HCT116 (cell line): ENCODE measurements at regions of chr7 and their contacts with region 1.

Region 1: GRCh38 chr7:130961128-130961601 is 227.2 kb upstream of the KLF14 start:
- DNase-seq: peak; percentile 75
- ATAC-seq: peak; percentile 69
- H3K4me3 ChIP-seq: peak overlapping the region; percentile 57 to 64
- H3K27ac ChIP-seq: peak overlapping the region; percentile 91
- H3K4me1 ChIP-seq: peaks cover 48 to 83% of the 10 kb centered on the region in 2 experiments
- H3K27me3 ChIP-seq: no peaks in the 10 kb centered on the region
- CTCF ChIP-seq: no peak
- POLR2A ChIP-seq: peak; percentile 66
- RAD21 ChIP-seq: no peak

Region 2: DNA sequence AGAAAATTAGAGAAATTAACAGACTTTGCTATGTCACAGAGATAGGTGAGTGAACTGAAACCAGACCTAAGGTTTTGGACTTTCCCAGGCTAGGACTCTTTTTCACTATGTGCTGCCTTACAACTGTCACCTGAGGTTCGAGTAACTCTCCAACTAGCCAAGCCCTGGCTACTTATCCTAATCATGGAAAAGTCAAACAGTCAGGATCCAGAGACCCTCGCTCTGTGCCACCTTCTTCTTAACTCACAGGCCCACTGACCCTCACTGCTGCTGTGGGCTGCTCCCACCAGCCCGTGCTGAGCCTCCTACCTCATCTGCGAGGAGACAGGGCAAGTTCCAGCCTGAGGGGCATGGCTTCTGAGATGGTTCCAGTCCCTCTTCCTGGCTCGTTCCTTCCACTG is 15.8 kb before region 1 on chr7:
- CTCF ChIA-PET with region 1: interaction called, 12 read pairs
- POLR2A ChIA-PET with region 1: interaction called, 21 read pairs
- RAD21 ChIA-PET with region 1: no interaction called
- intact Hi-C with region 1: no loop called
- DNase-seq: no peak
- ATAC-seq: no peak
- H3K4me3 ChIP-seq: no peak overlapping the region
- H3K27ac ChIP-seq: peak overlapping the region; percentile 85
- H3K4me1 ChIP-seq: peaks cover 76 to 96% of the 10 kb centered on the region in 2 experiments
- H3K27me3 ChIP-seq: no peaks in the 10 kb centered on the region
- CTCF ChIP-seq: no peak
- POLR2A ChIP-seq: no peak
- RAD21 ChIP-seq: no peak

Region 3: GRCh38 chr7:130982160-130982638 is 21.0 kb after region 1 on chr7:
- CTCF ChIA-PET with region 1: interaction called, 10 read pairs
- POLR2A ChIA-PET with region 1: interaction called, 6 read pairs
- RAD21 ChIA-PET with region 1: no interaction called
- intact Hi-C with region 1: no loop called
- DNase-seq: no peak
- ATAC-seq: peak; percentile 79
- H3K4me3 ChIP-seq: no peak overlapping the region
- H3K27ac ChIP-seq: peak overlapping the region; percentile 67
- H3K4me1 ChIP-seq: peaks cover 57 to 84% of the 10 kb centered on the region in 2 experiments
- H3K27me3 ChIP-seq: no peaks in the 10 kb centered on the region
- CTCF ChIP-seq: peak; percentile 75 to 85 (median 81)
- POLR2A ChIP-seq: no peak
- RAD21 ChIP-seq: peak; percentile 91

Region 4: GRCh38 chr7:131007394-131008330 is 46.5 kb after region 1 on chr7:
- CTCF ChIA-PET with region 1: interaction called, 3 read pairs
- POLR2A ChIA-PET with region 1: interaction called, 10 read pairs
- RAD21 ChIA-PET with region 1: no interaction called
- intact Hi-C with region 1: no loop called
- DNase-seq: peak; percentile 85
- ATAC-seq: peak; percentile 67
- H3K4me3 ChIP-seq: peak overlapping the region in 1 of 2 experiments; percentile 3; a peak in 1 of 4 replicates
- H3K27ac ChIP-seq: peak overlapping the region; percentile 96
- H3K4me1 ChIP-seq: peaks cover 94 to 97% of the 10 kb centered on the region in 2 experiments
- H3K27me3 ChIP-seq: no peaks in the 10 kb centered on the region
- CTCF ChIP-seq: peak in 2 of 3 experiments; percentile 48 to 60; a peak in 4 of 6 replicates
- POLR2A ChIP-seq: no peak
- RAD21 ChIP-seq: no peak

Region 5: GRCh38 chr7:131040467-131040932 is 79.3 kb after region 1 on chr7:
- CTCF ChIA-PET with region 1: interaction called, 15 read pairs
- POLR2A ChIA-PET with region 1: interaction called, 5 read pairs
- RAD21 ChIA-PET with region 1: interaction called in 1 of 2 experiments, 3 read pairs
- intact Hi-C with region 1: no loop called
- DNase-seq: peak; percentile 73
- ATAC-seq: peak; percentile 79
- H3K4me3 ChIP-seq: no peak overlapping the region
- H3K27ac ChIP-seq: peak overlapping the region; percentile 65
- H3K4me1 ChIP-seq: peaks cover 56 to 63% of the 10 kb centered on the region in 2 experiments
- H3K27me3 ChIP-seq: no peaks in the 10 kb centered on the region
- CTCF ChIP-seq: peak; percentile 85 to 96 (median 90)
- POLR2A ChIP-seq: no peak
- RAD21 ChIP-seq: peak; percentile 99

Region 6: DNA sequence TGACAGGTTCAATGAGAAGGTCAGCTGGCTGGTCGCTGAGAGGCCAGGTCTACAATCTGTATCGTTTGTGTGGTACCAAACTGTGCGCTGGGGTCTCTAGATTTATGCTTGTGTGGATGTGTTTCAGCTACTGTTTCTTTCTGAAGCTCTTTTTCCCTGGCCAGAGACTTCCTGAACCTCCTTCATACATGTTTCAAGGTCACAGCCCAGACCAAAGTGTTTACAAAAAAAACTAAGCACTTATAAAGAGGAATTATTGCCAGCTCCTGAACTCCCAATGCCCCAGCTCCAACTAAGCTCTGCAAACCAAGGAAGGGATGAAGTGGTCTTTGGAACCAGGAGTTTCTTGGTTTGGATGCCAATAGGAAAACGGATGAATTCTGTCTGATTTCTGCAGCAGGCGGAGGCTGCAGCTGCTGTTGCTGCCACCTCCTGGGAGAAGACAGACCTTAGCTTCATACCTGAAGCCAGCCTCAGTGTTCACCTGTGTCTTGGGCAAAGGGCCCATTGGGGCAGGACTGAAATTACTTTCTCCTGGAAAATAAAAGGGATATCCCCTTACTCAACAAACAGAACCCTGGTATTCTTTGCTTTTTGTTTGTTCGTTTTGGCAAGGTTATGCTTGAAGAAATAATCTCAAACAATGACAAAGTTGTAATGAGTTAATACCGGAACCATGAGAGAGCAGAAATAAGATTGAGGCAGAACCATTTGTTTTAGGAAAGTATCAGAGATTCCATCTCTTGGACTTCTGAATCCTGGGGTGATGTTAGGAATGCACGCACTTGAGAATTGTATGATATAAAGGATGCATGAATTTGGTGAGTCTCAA is 341.9 kb after region 1 on chr7:
- CTCF ChIA-PET with region 1: no interaction called
- POLR2A ChIA-PET with region 1: no interaction called
- RAD21 ChIA-PET with region 1: no interaction called
- intact Hi-C with region 1: no loop called
- DNase-seq: peak; percentile 39
- ATAC-seq: peak; percentile 94
- H3K4me3 ChIP-seq: no peak overlapping the region
- H3K27ac ChIP-seq: no peak overlapping the region
- H3K4me1 ChIP-seq: peaks cover 0 to 8% of the 10 kb centered on the region in 2 experiments; a peak in 1 of 4 replicates
- H3K27me3 ChIP-seq: no peaks in the 10 kb centered on the region
- CTCF ChIP-seq: peak; percentile 69 to 74 (median 72); a peak in 5 of 6 replicates
- POLR2A ChIP-seq: no peak
- RAD21 ChIP-seq: peak; percentile 94